Activated naive CD4-positive, alpha-beta T cell treated with anti-CD3 and anti-CD28 coated beads for 36 hours (primary cell): ENCODE measurements at regions of chr13 and their contacts with region 1.

Region 1: DNA sequence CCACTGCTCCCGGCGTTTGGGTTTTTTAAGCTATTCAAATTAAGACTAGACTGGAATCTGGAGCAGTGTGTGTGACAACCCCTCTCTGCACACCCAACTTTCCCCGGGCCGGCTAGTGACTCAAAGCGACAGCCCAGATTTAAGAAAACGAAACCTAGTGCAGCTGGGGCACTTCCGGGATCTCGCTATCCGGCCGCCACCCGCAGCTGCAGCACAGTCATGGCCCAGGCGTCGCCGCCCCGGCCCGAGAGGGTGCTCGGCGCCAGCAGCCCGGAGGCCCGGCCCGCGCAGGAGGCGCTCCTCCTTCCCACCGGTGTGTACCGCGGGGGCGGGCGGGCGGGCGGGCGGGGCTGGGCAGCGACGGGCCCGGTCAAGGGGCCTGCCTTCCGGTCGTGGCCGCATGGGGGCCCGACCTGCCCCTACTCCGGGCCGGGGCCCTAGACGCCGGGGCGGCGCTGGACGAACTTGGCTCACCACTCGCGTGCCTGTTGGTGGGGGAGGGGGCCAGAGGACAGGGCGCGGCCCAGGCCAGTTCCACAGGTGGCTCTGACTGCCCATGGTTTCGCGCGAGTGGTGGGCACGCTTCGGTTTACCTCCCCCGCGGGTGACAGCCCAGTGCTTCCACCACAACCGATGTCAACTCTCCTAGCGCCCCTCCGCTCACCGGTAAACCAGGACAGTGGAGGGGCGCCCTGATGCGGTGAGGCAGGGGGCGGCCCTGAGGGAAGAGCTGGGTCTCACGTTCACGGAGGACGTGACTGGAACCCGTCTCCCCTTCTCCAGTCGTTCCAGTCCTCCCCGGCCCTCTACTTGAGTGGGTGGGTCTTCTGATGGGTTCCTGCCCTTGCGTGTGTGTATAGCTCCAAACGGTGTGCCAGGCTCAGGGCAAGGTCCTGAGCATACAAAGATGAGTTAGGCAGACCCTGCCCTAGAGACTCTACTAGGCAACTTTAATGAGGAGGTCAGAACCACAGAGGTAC is at the start of gene PHF11:
- DNase-seq: peak; percentile 95
- H3K4me3 Mint-ChIP-seq: peak within 1 kb of the TSS; percentile 91
- H3K27ac Mint-ChIP-seq: peak within 1 kb of the TSS; percentile 96
- H3K4me1 Mint-ChIP-seq: peaks cover 49% of the 10 kb centered on the region
- H3K27me3 Mint-ChIP-seq: no peaks in the 10 kb centered on the region
- total RNA-seq, gene PHF11: 91.4 to 96.9 TPM

Region 2: DNA sequence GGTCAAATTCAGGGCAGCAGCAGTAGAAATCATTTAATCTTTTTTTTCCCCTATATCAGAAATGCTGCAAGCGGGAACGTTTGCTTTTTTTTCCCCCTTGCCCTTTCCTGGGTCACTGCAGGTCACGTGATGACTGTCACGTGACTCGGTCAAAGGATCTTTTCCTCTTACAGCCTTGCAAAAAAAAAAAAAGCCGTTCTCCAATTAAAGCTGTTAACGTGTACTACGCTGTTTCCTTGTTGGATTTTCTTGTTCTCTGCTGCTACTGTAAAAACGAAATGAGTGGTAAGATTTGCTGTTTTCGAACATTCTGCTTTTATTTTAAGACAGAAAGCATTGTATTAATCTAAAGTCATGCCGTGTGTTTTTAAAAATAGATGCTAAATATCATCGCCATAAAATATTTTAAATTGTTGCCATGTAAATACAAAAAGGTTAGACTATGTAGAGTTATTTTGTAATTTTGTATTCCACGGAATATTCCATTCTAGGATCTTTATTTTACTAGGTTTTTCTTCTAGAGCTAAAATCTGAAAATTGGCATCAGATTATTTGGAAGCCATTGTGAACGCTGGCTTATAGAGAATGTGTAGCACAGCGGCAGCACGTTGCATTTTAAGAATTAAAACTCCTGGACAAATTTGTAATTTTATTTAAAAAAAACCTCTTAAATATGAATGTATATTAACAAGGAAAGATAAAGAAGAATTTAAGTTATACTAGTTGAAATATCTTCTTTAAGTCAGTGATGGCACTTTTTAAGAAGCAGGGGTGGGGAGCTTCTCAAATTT is 385.8 kb before region 1 on chr13:
- CTCF ChIA-PET with region 1: no interaction called
- intact Hi-C with region 1: loop called (anchors 5 kb)
- DNase-seq: peak; percentile 87
- H3K4me3 Mint-ChIP-seq: peak overlapping the region; percentile 75
- H3K27ac Mint-ChIP-seq: peak overlapping the region; percentile 84
- H3K4me1 Mint-ChIP-seq: peaks cover 25% of the 10 kb centered on the region
- H3K27me3 Mint-ChIP-seq: no peaks in the 10 kb centered on the region

Region 3: DNA sequence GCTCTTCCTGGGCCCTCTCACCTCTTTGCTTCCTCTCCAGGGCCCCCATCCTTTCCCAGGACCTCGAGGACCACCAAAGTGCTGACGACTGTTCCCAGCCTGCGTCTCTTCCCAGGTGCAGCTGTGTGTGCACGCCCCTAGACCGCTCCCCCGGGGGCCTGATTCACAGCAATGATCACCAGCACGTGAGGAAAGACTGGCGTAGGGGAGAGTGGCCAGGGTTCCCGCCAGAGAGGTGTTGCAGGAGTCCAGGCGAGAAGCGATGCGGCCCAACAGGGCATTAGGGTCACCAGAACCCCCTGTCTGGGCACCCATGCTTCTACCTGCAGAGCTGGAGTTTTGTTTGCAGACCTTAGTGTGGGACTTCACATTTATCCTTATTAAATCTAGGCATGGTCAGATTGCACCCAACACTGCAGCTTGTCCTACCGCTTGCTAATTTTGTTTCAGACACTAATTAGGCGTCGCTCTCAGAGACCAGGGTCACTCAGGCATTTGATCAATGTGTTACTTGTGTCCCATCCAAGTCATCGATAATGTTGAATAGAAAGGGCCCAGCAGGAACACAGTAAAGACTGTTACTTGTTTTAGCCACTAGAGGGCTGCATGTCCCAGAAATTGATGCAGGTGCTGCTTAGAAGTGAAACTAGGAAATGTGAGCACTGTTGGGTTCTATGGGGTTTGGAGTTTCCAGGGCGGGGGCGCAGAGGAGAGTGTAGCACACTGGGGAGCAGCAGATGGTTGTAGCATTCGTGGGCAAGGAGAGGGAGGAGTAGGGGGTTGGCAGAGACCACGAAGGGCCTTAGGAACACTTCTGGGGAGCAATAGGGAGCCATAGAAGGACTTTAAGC is 195.1 kb before region 1 on chr13:
- CTCF ChIA-PET with region 1: no interaction called
- intact Hi-C with region 1: loop called (anchors 1 kb)
- DNase-seq: peak; percentile 78
- H3K4me3 Mint-ChIP-seq: peak overlapping the region; percentile 68
- H3K27ac Mint-ChIP-seq: peak overlapping the region; percentile 61
- H3K4me1 Mint-ChIP-seq: peaks cover 11% of the 10 kb centered on the region
- H3K27me3 Mint-ChIP-seq: no peaks in the 10 kb centered on the region

Region 4: GRCh38 chr13:49569956-49570689 is 74.0 kb after region 1 on chr13:
- CTCF ChIA-PET with region 1: no interaction called
- intact Hi-C with region 1: loop called (anchors 1 kb)
- DNase-seq: peak; percentile 44
- H3K4me3 Mint-ChIP-seq: no peak overlapping the region
- H3K27ac Mint-ChIP-seq: peak overlapping the region; percentile 32
- H3K4me1 Mint-ChIP-seq: peaks cover 23% of the 10 kb centered on the region
- H3K27me3 Mint-ChIP-seq: no peaks in the 10 kb centered on the region

Region 5: DNA sequence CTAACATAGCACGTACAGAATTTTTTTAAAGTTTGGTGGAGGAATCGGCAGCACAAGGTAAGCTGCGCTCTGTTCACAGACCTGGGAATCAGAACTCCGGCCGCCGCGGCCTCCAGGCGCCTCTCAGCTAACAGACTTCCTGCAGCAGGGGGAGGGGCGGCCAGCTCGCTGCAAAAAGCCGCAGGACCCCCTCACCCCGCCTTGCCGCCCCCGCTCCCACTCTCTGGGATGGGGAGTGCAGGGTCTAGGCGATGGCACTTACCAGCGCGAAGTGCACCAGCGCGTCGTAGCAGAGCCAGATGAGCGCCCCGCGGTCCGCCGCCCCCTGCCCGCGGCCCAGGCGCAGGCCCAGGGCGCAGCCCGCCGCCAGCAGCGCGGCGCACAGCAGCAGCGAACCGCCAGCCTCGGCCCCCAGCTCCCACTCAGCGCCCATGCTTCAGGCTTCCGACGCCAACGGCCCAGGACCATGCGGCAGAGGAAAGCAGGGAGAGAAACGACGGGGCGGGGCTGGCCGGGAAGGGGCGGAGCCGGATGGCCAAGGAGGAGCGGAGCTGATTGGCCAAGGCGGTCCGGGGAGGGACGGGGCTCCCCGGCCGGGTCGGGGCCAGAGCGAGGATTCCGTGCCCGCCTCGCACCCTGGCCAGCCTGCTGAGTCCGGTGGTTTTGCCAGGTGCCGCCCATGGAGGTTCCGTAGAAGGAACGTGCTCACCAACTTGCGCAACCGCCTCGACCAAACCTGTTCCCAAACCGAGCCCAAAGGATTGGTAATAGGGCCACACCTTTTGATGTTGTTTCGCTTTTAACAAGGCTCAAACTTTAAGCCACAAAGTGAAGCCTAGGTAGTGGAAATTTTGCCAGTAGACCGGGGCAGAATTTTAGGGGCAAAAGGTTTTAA is 195.2 kb after region 1 on chr13 and contains the start of gene EBPL:
- CTCF ChIA-PET with region 1: no interaction called
- intact Hi-C with region 1: loop called (anchors 5 kb)
- DNase-seq: peak; percentile 94
- H3K4me3 Mint-ChIP-seq: peak within 1 kb of the TSS; percentile 86
- H3K27ac Mint-ChIP-seq: peak within 1 kb of the TSS; percentile 80
- H3K4me1 Mint-ChIP-seq: peaks cover 35% of the 10 kb centered on the region
- H3K27me3 Mint-ChIP-seq: no peaks in the 10 kb centered on the region
- total RNA-seq, gene EBPL: 46.8 to 49.3 TPM

Region 6: GRCh38 chr13:49936085-49936940 is 440.2 kb after region 1 on chr13 and contains the start of gene SPRYD7:
- CTCF ChIA-PET with region 1: no interaction called
- intact Hi-C with region 1: loop called (anchors 5 kb)
- DNase-seq: peak; percentile 96
- H3K4me3 Mint-ChIP-seq: peak within 1 kb of the TSS; percentile 90
- H3K27ac Mint-ChIP-seq: peak within 1 kb of the TSS; percentile 70
- H3K4me1 Mint-ChIP-seq: peaks cover 7% of the 10 kb centered on the region
- H3K27me3 Mint-ChIP-seq: peaks cover 2% of the 10 kb centered on the region
- total RNA-seq, gene SPRYD7: 2.5 to 2.6 TPM

Region 7: GRCh38 chr13:50236898-50237318 is 740.8 kb after region 1 on chr13:
- CTCF ChIA-PET with region 1: no interaction called
- intact Hi-C with region 1: loop called (anchors 5 kb)
- DNase-seq: peak; percentile 62
- H3K4me3 Mint-ChIP-seq: no peak overlapping the region
- H3K27ac Mint-ChIP-seq: peak overlapping the region; percentile 61
- H3K4me1 Mint-ChIP-seq: peaks cover 48% of the 10 kb centered on the region
- H3K27me3 Mint-ChIP-seq: peaks cover 12% of the 10 kb centered on the region